Activated naive CD4-positive, alpha-beta T cell treated with anti-CD3 and anti-CD28 coated beads, Interleukin-2, amount 10 ng/mL, durations not matched to agents 7 days and 5 days (primary cell): ENCODE measurements at regions of chr15 and their contacts with region 1.

Region 1: GRCh38 chr15:58227706-58228543 is 89.7 kb downstream of the AQP9 start:
- DNase-seq: peak; percentile 82
- H3K4me3 Mint-ChIP-seq: no peak overlapping the region
- H3K27ac Mint-ChIP-seq: no peak overlapping the region
- H3K4me1 Mint-ChIP-seq: peaks cover 16% of the 10 kb centered on the region
- H3K27me3 Mint-ChIP-seq: peaks cover 30% of the 10 kb centered on the region

Region 2: GRCh38 chr15:58240221-58240932 is 12.5 kb after region 1 on chr15:
- CTCF ChIA-PET with region 1: no interaction called
- DNase-seq: no peak
- H3K4me3 Mint-ChIP-seq: no peak overlapping the region
- H3K27ac Mint-ChIP-seq: no peak overlapping the region
- H3K4me1 Mint-ChIP-seq: peaks cover 3% of the 10 kb centered on the region
- H3K27me3 Mint-ChIP-seq: peaks cover 12% of the 10 kb centered on the region

Region 3: GRCh38 chr15:58269455-58270414 is 41.8 kb after region 1 on chr15:
- CTCF ChIA-PET with region 1: interaction called, 15 read pairs
- DNase-seq: peak; percentile 58
- H3K4me3 Mint-ChIP-seq: no peak overlapping the region
- H3K27ac Mint-ChIP-seq: no peak overlapping the region
- H3K4me1 Mint-ChIP-seq: peaks cover 10% of the 10 kb centered on the region
- H3K27me3 Mint-ChIP-seq: peaks cover 4% of the 10 kb centered on the region